Activated CD4-positive, alpha-beta memory T cell treated with anti-CD3 and anti-CD28 coated beads for 36 hours (primary cell): ENCODE measurements at regions of chr13 and their contacts with region 1.

Region 1: GRCh38 chr13:98484289-98485219 is 92.4 kb downstream of the STK24 start:
- DNase-seq: peak; percentile 87
- H3K4me3 Mint-ChIP-seq: peak overlapping the region; percentile 30
- H3K27ac Mint-ChIP-seq: peak overlapping the region; percentile 83
- H3K4me1 Mint-ChIP-seq: peaks cover 92% of the 10 kb centered on the region
- H3K27me3 Mint-ChIP-seq: no peaks in the 10 kb centered on the region

Region 2: DNA sequence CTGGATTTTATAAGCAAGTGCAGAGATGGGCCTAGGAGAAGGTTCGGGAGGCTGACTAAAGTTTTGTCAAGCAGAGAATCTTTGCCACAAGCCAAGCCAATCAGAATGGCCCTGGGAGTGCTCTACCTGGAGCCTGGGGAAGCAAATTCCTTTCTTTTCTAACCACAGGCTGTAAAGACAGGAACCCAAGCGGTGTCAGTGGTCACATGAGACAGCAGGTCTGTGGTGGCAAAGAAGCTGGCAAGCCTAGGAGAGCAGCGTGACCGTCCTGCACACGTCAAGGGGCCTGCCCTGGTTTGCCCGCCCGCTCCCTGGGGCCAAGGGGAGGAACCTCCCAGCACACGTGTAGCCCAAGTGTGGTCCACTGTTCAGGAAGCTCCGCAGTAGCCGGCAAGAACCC is 440.3 kb before region 1 on chr13:
- CTCF ChIA-PET with region 1: no interaction called
- POLR2A ChIA-PET with region 1: no interaction called
- intact Hi-C with region 1: no loop called
- DNase-seq: no peak
- H3K4me3 Mint-ChIP-seq: no peak overlapping the region
- H3K27ac Mint-ChIP-seq: no peak overlapping the region
- H3K4me1 Mint-ChIP-seq: no peaks in the 10 kb centered on the region
- H3K27me3 Mint-ChIP-seq: peaks cover 3% of the 10 kb centered on the region

Region 3: DNA sequence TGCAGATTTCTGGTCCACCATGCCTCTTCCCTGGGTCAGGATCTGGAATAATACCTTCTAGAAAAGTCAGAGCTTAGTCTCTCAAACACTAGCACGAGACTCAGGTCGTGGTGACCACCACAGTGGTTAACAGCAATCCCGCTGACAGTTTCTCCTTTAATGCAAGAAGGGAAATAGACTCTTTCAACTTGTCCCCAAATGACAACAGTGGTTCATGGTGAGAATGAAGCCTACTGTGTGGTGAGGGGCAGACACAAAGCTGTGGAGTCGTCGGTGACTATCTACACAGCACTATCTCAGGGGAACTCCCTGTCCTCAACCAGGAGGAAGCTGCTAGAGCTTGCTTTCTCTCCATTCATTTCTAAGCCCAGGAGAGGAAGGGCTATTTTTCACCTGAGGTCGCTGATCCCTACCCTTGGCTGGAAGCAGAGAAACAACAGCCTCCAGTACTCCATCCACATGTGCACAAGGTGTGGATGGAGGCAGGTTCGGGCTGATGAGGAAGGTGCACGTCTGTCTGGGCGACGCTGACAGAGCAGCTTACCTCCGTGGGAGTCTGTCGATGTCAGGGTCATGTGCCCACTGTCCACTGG is 19.9 kb after region 1 on chr13:
- CTCF ChIA-PET with region 1: interaction called, 8 read pairs
- POLR2A ChIA-PET with region 1: interaction called, 8 read pairs
- intact Hi-C with region 1: loop called (anchors 1 kb)
- DNase-seq: peak; percentile 67
- H3K4me3 Mint-ChIP-seq: no peak overlapping the region
- H3K27ac Mint-ChIP-seq: peak overlapping the region; percentile 5
- H3K4me1 Mint-ChIP-seq: peaks cover 81% of the 10 kb centered on the region
- H3K27me3 Mint-ChIP-seq: no peaks in the 10 kb centered on the region

Region 4: DNA sequence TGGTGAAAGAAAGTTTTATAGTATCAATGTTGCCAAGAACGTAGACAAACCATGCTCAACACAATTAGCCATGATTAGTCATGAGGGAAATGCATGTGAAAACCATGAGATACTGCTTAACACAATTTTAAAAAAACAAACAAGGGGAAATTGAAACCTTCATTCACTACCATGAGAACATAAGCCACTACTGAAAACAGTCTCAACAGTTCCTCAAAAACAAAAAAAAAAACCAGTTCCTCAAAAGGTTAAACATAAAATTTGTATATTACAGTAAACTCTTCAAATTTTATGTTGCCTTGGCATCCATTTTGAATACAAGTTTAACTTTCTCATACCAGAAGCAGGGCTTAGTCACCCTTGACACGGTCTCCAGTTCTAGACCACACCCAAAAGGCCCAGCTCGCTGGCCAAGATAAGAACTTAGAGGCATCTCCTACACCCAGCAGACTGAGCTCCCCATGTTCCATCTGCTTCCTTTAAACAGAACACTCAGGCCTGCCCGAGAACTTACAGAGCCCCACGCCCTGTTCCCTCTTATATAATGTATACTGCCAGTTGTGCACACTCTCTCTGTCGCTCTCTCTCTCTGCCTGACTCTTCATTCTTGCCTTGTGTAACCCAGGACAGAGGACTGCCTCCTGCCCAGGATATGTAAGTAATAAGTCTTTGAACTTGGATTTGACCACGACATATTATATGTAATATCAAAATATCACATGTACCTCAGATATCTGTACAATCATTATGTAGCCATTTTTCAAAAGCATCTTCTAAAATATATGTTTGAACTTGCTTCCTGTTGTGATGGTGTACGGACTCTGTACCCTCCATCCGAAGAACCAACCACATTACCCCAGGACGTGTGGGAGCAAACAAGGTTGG is 25.0 kb after region 1 on chr13:
- CTCF ChIA-PET with region 1: interaction called, 8 read pairs
- POLR2A ChIA-PET with region 1: interaction called, 5 read pairs
- intact Hi-C with region 1: loop called (anchors 1 kb)
- DNase-seq: peak; percentile 78
- H3K4me3 Mint-ChIP-seq: peak overlapping the region; percentile 33
- H3K27ac Mint-ChIP-seq: peak overlapping the region; percentile 95
- H3K4me1 Mint-ChIP-seq: peaks cover 95% of the 10 kb centered on the region
- H3K27me3 Mint-ChIP-seq: no peaks in the 10 kb centered on the region

Region 5: DNA sequence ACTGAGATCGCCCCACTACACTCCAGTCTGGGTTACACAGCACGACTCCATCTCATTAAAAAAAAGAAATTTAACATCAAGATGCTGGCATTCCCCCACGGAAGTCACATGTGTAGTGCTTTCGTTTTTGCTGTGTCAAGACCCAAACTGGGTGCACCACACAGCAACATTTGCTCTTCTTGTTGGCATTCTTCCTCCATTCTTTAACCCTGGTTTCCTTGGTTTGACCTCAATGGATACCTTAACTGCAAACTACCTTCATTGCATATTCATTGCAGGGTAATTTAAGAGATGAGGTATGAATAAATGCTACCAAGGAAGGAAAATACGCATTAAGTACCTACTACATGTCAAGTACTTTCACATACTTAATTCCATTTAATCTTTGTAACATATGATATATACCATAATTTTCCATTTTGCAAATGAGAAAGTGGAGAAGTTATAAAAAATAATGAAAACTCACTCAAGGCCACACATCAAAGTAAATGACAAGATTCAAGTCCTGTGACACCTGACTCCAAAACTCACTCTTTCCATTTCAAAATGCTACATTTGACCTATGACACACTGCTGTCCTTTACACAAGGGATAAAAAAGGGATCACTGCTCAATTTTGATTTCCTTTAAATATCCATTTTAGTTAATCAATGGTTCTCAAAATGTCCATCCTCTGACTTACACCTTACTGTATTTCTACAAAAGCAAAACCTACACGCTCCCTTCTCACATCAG is 33.2 kb after region 1 on chr13:
- CTCF ChIA-PET with region 1: interaction called, 7 read pairs
- POLR2A ChIA-PET with region 1: interaction called, 10 read pairs
- intact Hi-C with region 1: no loop called
- DNase-seq: peak; percentile 75
- H3K4me3 Mint-ChIP-seq: peak overlapping the region; percentile 53
- H3K27ac Mint-ChIP-seq: peak overlapping the region; percentile 93
- H3K4me1 Mint-ChIP-seq: peaks cover 98% of the 10 kb centered on the region
- H3K27me3 Mint-ChIP-seq: no peaks in the 10 kb centered on the region